Activated B cell treated with CpG ODN at 0.5 μM for 24 hours (primary cell): ENCODE measurements at regions of chr6 and their contacts with region 1.

Region 1: DNA sequence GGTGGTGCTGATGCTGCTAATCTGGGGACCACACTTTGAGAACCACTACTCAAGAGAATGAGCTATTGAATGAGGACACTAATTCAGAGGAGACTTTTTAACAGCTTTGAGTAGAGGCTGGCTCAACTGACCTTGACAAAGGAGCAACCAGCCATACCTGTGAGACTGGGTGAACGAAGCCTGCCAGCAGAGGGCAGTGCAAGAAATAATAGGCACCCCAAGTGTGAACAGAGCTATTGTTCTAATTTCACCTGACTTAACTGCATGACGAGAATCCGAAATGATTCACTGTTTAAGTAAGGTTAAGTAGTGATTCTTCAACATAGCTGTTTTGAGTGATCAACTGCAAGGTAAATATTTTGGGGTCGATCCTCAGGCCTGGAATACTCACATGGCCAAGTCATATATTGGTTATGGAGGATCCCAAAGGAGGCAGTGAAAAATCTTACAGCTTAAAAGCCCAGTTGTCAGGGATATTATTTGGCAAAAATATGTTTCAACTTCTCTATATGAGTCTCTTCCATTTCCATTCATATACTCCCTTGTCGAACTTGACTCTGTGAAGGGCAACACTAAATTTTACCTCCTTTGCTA is 550.5 kb upstream of the MARCKS start:
- DNase-seq: peak; percentile 51
- ATAC-seq: peak; percentile 97
- H3K4me3 Mint-ChIP-seq: no peak overlapping the region
- H3K27ac Mint-ChIP-seq: no peak overlapping the region
- H3K4me1 Mint-ChIP-seq: peaks cover 6% of the 10 kb centered on the region
- H3K27me3 Mint-ChIP-seq: no peaks in the 10 kb centered on the region
- CTCF ChIP-seq: peak; percentile 31

Region 2: GRCh38 chr6:112780498-112781096 is 526.1 kb before region 1 on chr6:
- CTCF ChIA-PET with region 1: interaction called, 7 read pairs
- POLR2A ChIA-PET with region 1: no interaction called
- intact Hi-C with region 1: loop called (anchors 2 kb)
- DNase-seq: peak; percentile 23
- ATAC-seq: peak; percentile 80
- H3K4me3 Mint-ChIP-seq: no peak overlapping the region
- H3K27ac Mint-ChIP-seq: no peak overlapping the region
- H3K4me1 Mint-ChIP-seq: peaks cover 3% of the 10 kb centered on the region
- H3K27me3 Mint-ChIP-seq: no peaks in the 10 kb centered on the region
- CTCF ChIP-seq: peak; percentile 49

Region 3: DNA sequence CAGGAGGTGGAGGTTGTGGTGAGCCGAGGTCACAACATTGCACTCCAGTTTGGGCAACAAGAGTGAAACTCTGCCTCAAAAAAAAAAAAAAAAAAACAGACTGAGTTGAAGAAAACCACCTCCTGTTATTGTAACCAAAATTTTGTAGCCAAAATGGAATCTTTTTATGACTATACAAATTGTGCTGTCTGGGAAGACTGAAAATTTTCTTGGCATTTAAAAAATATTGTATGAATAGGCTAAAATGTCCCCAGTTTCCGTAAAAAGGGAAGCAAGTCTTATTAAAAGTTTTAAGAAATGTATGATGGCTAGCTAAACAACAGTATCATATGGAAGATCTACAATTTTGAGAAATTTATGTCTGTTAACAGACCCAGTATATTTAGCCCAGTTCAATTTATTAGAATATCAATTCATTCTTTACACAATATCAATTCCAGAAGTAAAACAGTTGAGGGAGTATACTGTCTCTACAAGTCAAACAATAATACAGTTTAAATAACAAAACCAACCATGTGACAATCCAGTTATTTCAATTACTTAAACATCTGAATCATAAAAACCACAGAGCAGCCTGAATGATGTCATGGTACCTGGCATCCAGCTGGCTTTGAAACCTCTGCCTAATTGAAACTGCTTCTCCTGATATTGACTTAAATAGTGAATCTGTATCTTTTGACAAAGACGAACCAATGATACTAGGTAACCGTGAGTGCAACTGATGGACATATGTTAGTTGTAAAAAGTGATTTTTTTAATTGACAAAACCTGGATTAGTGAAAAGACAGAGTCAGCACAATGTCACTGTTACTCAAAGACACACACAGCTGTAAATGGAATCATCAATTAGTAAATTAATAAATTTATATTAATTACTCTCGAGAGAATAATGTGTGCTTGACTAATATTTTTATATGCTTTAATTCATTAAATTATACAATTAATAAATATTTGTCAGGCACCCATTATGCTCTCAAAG is 383.9 kb after region 1 on chr6:
- CTCF ChIA-PET with region 1: interaction called, 3 read pairs
- POLR2A ChIA-PET with region 1: no interaction called
- intact Hi-C with region 1: loop called (anchors 5 kb)
- DNase-seq: no peak
- ATAC-seq: peak; percentile 71
- H3K4me3 Mint-ChIP-seq: peak overlapping the region; percentile 19
- H3K27ac Mint-ChIP-seq: peak overlapping the region; percentile 46
- H3K4me1 Mint-ChIP-seq: peaks cover 23% of the 10 kb centered on the region
- H3K27me3 Mint-ChIP-seq: no peaks in the 10 kb centered on the region
- CTCF ChIP-seq: no peak

Region 4: DNA sequence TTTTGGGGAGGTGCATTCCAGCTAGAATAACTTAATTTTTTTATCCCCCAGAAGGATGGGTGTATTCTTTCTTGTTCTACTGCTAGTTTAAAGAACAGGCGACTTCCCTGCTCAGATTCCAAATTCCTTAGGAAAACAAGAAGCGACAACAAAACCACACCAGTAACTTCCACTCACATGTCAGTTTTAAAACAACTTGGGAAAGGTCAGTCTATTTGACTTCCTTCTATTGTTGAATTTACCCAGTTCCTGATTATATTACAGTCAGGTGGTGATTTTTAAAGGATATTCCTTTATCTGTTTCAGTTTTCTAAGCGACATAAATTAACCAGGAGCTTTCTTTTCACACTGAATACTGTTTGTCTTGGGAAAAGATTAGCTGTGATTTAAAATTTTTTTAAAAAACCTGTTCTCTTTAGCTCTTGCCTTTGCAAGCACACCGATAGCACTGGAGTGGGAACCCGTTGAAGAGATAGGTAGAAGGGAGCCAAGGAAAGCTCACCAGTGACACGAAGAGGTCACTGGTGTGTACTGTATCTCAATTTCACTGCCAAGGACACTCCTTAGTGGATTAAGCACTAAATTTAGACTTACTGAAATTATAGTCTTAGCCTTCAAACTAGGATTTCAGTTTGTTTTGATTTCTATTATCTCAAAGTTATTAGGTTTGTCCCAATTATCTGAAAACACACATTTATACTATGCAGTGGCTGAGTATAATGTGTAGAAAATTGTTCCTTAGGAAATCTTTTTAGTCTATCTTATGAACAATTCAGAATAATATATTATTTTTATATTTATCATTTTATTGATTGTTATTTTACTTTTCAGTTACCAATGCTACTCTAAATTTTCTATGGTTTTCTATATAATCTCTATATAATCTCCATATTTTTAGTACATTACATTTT is 572.8 kb after region 1 on chr6:
- CTCF ChIA-PET with region 1: interaction called, 48 read pairs
- POLR2A ChIA-PET with region 1: interaction called, 3 read pairs
- intact Hi-C with region 1: loop called (anchors 1 kb)
- DNase-seq: no peak
- ATAC-seq: peak; percentile 100
- H3K4me3 Mint-ChIP-seq: no peak overlapping the region
- H3K27ac Mint-ChIP-seq: no peak overlapping the region
- H3K4me1 Mint-ChIP-seq: peaks cover 7% of the 10 kb centered on the region
- H3K27me3 Mint-ChIP-seq: peaks cover 5% of the 10 kb centered on the region
- CTCF ChIP-seq: no peak